ENCODE measurements at regions of chr2 and their contacts with region 1.

Region 1: GRCh38 chr2:9630749-9631483 is at the start of gene YWHAQ:
- DNase-seq: peak; percentile 99
- H3K4me3 ChIP-seq: peak within 1 kb of the TSS; percentile 64 to 97 (median 89)
- H3K27ac ChIP-seq: peak within 1 kb of the TSS; percentile 51
- H3K4me1 ChIP-seq: peaks cover 22% of the 10 kb centered on the region
- H3K27me3 ChIP-seq: no peaks in the 10 kb centered on the region
- CTCF ChIP-seq: no peak
- POLR2A ChIP-seq: peak; percentile 95
- total RNA-seq, gene YWHAQ: 347 and 456 TPM in 2 replicates

Region 2: GRCh38 chr2:9423100-9423921 is 207.6 kb before region 1 on chr2 and contains the starts of genes CPSF3 and ITGB1BP1:
- CTCF ChIA-PET with region 1: no interaction called
- POLR2A ChIA-PET with region 1: no interaction called
- dilution Hi-C with region 1: no loop called
- intact Hi-C with region 1: loop called (anchors 2 kb)
- DNase-seq: peak; percentile 96
- H3K4me3 ChIP-seq: peak within 1 kb of the TSS; percentile 52 to 98 (median 75)
- H3K27ac ChIP-seq: peak within 1 kb of the TSS; percentile 62
- H3K4me1 ChIP-seq: peaks cover 16% of the 10 kb centered on the region
- H3K27me3 ChIP-seq: no peaks in the 10 kb centered on the region
- CTCF ChIP-seq: no peak
- POLR2A ChIP-seq: peak; percentile 76
- total RNA-seq, gene CPSF3: 35.6 and 37.1 TPM in 2 replicates
- total RNA-seq, gene ITGB1BP1: 95.5 and 170 TPM in 2 replicates

Region 3: GRCh38 chr2:9613291-9613690 is 17.6 kb before region 1 on chr2:
- CTCF ChIA-PET with region 1: interaction called, 4 read pairs
- POLR2A ChIA-PET with region 1: interaction called, 5 read pairs
- dilution Hi-C with region 1: no loop called
- intact Hi-C with region 1: loop called (anchors 1 kb)
- DNase-seq: no peak
- H3K4me3 ChIP-seq: no peak overlapping the region
- H3K27ac ChIP-seq: no peak overlapping the region
- H3K4me1 ChIP-seq: peaks cover 8% of the 10 kb centered on the region
- H3K27me3 ChIP-seq: no peaks in the 10 kb centered on the region
- CTCF ChIP-seq: no peak
- POLR2A ChIP-seq: no peak

Region 4: GRCh38 chr2:9675415-9676351 is 44.8 kb after region 1 on chr2:
- CTCF ChIA-PET with region 1: interaction called, 5 read pairs
- POLR2A ChIA-PET with region 1: no interaction called
- dilution Hi-C with region 1: no loop called
- intact Hi-C with region 1: loop called (anchors 1 kb)
- DNase-seq: peak; percentile 62
- H3K4me3 ChIP-seq: no peak overlapping the region
- H3K27ac ChIP-seq: peak overlapping the region; percentile 43
- H3K4me1 ChIP-seq: peaks cover 14% of the 10 kb centered on the region
- H3K27me3 ChIP-seq: no peaks in the 10 kb centered on the region
- CTCF ChIP-seq: no peak
- POLR2A ChIP-seq: no peak

Region 5: GRCh38 chr2:9843229-9844035 is 212.5 kb after region 1 on chr2 and contains the start of gene TAF1B:
- CTCF ChIA-PET with region 1: no interaction called
- POLR2A ChIA-PET with region 1: interaction called, 4 read pairs
- dilution Hi-C with region 1: no loop called
- intact Hi-C with region 1: loop called (anchors 1 kb)
- DNase-seq: peak; percentile 96
- H3K4me3 ChIP-seq: peak within 1 kb of the TSS; percentile 56 to 86 (median 84)
- H3K27ac ChIP-seq: peak within 1 kb of the TSS; percentile 78
- H3K4me1 ChIP-seq: peaks cover 28% of the 10 kb centered on the region
- H3K27me3 ChIP-seq: no peaks in the 10 kb centered on the region
- CTCF ChIP-seq: peak in 1 of 2 donors; percentile 42
- POLR2A ChIP-seq: peak; percentile 80
- total RNA-seq, gene TAF1B: 20.1 and 29.4 TPM in 2 replicates

Region 6: GRCh38 chr2:9889812-9890261 is 258.9 kb after region 1 on chr2:
- CTCF ChIA-PET with region 1: no interaction called
- POLR2A ChIA-PET with region 1: no interaction called
- dilution Hi-C with region 1: no loop called
- intact Hi-C with region 1: no loop called
- DNase-seq: peak; percentile 24
- H3K4me3 ChIP-seq: no peak overlapping the region
- H3K27ac ChIP-seq: no peak overlapping the region
- H3K4me1 ChIP-seq: no peaks in the 10 kb centered on the region
- H3K27me3 ChIP-seq: no peaks in the 10 kb centered on the region
- CTCF ChIP-seq: no peak
- POLR2A ChIP-seq: no peak